Activated CD4-positive, alpha-beta memory T cell treated with anti-CD3 and anti-CD28 coated beads for 36 hours (primary cell): ENCODE measurements at regions of chr22 and their contacts with region 1.

Region 1: DNA sequence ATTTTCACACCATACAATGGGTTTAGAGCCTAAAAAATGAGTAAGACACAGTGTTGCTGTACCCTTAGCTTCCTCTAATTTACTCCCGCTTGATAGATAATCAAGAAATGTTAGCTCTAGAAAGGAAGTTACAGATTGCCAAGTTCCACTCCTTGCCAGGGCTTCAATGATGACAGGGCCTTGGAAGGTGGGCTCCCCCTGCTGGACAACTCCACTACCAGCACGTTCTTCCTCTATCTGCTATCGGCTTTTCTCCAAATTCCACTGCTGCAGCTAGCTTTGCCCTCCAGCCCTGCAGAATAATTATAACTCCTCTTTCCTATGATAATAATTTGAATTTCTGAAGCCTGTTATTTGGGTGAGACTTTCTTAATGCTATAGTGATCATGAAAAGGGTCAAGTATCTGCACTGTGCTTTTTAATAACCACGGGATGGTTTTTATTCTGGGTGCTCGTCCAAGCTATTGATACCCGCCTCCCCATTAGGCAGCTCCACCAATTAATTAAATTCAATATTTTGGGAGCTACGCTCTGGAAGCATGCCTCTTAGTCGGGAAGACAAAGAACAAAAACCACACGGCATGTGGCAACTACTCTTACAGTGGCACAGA is 9.0 kb downstream of the SYN3 start:
- DNase-seq: peak; percentile 65
- H3K4me3 Mint-ChIP-seq: no peak overlapping the region
- H3K27ac Mint-ChIP-seq: no peak overlapping the region
- H3K4me1 Mint-ChIP-seq: no peaks in the 10 kb centered on the region
- H3K27me3 Mint-ChIP-seq: peaks cover 25% of the 10 kb centered on the region

Region 2: GRCh38 chr22:33038131-33038772 is 11.0 kb before region 1 on chr22:
- CTCF ChIA-PET with region 1: interaction called, 14 read pairs
- POLR2A ChIA-PET with region 1: no interaction called
- intact Hi-C with region 1: no loop called
- DNase-seq: no peak
- H3K4me3 Mint-ChIP-seq: no peak overlapping the region
- H3K27ac Mint-ChIP-seq: no peak overlapping the region
- H3K4me1 Mint-ChIP-seq: no peaks in the 10 kb centered on the region
- H3K27me3 Mint-ChIP-seq: peaks cover 13% of the 10 kb centered on the region